ENCODE measurements at regions of chr12 and their contacts with region 1.

Region 1: GRCh38 chr12:53938326-53939140 is at the start of gene HOXC13:
- DNase-seq: peak; percentile 94
- H3K4me3 ChIP-seq: peak within 1 kb of the TSS; percentile 70 to 93 (median 85)
- H3K27ac ChIP-seq: peak within 1 kb of the TSS; percentile 31
- H3K4me1 ChIP-seq: peaks cover 18% of the 10 kb centered on the region
- H3K27me3 ChIP-seq: peaks cover 25% of the 10 kb centered on the region
- CTCF ChIP-seq: no peak
- polyA plus RNA-seq, gene HOXC13: 4.8 to 5.6 TPM (median 5.2 TPM) in 3 replicates

Region 2: GRCh38 chr12:53757095-53757770 is 181.3 kb before region 1 on chr12:
- dilution Hi-C with region 1: loop called (anchors 25 kb)
- DNase-seq: no peak
- H3K4me3 ChIP-seq: peak overlapping the region in 1 of 3 experiments; percentile 14
- H3K27ac ChIP-seq: no peak overlapping the region
- H3K4me1 ChIP-seq: peaks cover 11% of the 10 kb centered on the region
- H3K27me3 ChIP-seq: peaks cover 38% of the 10 kb centered on the region
- CTCF ChIP-seq: peak; percentile 75 to 98 (median 94)